CD4-positive, alpha-beta T cell (primary cell): ENCODE measurements at regions of chr9 and their contacts with region 1.

Region 1: DNA sequence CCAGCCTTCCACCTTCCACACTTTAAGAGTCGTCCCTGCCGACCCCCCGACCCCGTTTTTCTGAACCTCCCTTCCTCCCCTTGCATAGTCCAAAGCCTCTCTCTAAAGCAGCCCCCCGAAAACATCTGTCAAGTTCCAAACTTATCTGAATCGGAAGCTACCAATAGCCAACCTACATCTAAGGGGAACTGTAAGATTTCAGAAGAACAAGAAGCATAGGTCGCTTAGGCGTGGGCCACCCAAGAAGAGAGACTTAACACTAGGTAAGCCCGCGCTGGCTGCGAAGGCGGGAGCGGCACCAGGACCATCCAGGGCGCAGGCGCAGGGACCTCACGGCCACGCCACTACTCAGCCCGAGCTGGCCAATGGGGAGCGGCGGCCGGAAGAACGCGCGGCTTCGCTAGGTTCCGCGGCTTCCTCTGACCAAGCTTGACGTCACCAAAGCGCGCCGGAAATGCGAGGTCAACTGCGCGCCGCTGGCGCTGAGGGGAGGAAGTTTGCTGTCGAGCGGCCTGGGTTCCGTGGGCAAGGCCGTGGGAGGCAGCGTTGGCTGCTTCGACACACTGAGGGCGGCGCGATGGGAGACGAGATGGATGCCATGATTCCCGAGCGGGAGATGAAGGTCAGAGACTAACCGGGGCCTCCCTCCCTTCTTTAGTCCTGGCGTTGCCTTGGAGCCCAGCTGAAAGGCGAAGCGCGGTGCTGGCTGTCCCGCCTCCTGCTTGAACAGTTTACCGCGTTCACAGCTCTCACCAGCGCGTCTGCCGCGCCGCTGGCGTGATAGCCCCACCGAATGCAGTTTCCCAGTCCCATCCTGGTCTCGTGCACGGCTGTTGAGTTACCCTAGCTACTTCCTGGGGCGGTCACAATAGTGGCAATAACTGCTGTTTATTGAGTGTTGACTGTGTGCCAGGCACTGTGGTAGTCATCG is at the start of gene NUP214:
- DNase-seq: peak; percentile 97 to 100 (median 99)
- ATAC-seq: peak; percentile 97
- H3K4me3 ChIP-seq: peak within 1 kb of the TSS; percentile 76
- H3K4me3 Mint-ChIP-seq: peak within 1 kb of the TSS; percentile 96
- H3K27ac ChIP-seq: peak within 1 kb of the TSS; percentile 78 to 87
- H3K27ac Mint-ChIP-seq: peak within 1 kb of the TSS; percentile 92
- H3K4me1 ChIP-seq: peaks cover 24% of the 10 kb centered on the region
- H3K4me1 Mint-ChIP-seq: peaks cover 37% of the 10 kb centered on the region
- H3K27me3 ChIP-seq: no peaks in the 10 kb centered on the region
- H3K27me3 Mint-ChIP-seq: no peaks in the 10 kb centered on the region
- CTCF ChIP-seq: no peak
- total RNA-seq, gene NUP214: 105 to 107 TPM

Region 2: GRCh38 chr9:130693426-130694191 is 431.8 kb before region 1 on chr9 and contains the start of gene EXOSC2:
- CTCF ChIA-PET with region 1: no interaction called
- POLR2A ChIA-PET with region 1: interaction called, 8 read pairs
- intact Hi-C with region 1: loop called (anchors 2 to 10 kb)
- DNase-seq: peak; percentile 96 to 99 (median 98)
- ATAC-seq: peak; percentile 98
- H3K4me3 ChIP-seq: peak within 1 kb of the TSS; percentile 77
- H3K4me3 Mint-ChIP-seq: peak within 1 kb of the TSS; percentile 95
- H3K27ac ChIP-seq: peak within 1 kb of the TSS; percentile 42 to 57
- H3K27ac Mint-ChIP-seq: peak within 1 kb of the TSS; percentile 79
- H3K4me1 ChIP-seq: peaks cover 31% of the 10 kb centered on the region
- H3K4me1 Mint-ChIP-seq: peaks cover 44% of the 10 kb centered on the region
- H3K27me3 ChIP-seq: no peaks in the 10 kb centered on the region
- H3K27me3 Mint-ChIP-seq: no peaks in the 10 kb centered on the region
- CTCF ChIP-seq: no peak
- total RNA-seq, gene EXOSC2: 49.2 to 50.2 TPM

Region 3: DNA sequence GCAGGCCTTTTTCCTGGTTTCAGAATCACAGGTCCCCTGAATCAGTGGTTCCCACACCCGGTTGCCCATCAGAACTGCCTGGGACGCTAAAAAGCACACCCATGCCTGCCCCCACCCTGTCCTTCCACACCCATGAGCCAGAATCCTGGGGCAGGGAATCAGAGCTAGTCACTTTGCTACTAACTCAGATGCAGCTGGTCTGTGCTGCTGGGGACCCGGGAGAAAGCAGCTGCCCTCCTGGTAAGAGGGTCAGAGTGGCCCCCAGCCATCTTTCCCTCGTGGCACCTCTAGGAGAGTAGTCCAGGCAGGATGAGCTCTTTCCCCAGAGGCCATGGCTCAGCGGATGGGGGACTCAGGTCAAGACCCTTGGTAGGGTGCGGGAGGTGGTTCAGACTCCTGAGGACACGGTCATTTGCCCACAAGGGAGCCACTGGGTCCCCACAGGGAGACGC is 11.3 kb before region 1 on chr9:
- CTCF ChIA-PET with region 1: no interaction called
- POLR2A ChIA-PET with region 1: no interaction called
- intact Hi-C with region 1: no loop called
- DNase-seq: no peak
- ATAC-seq: no peak
- H3K4me3 ChIP-seq: no peak overlapping the region
- H3K4me3 Mint-ChIP-seq: no peak overlapping the region
- H3K27ac ChIP-seq: no peak overlapping the region
- H3K27ac Mint-ChIP-seq: no peak overlapping the region
- H3K4me1 ChIP-seq: no peaks in the 10 kb centered on the region
- H3K4me1 Mint-ChIP-seq: no peaks in the 10 kb centered on the region
- H3K27me3 ChIP-seq: peaks cover 2 to 5% of the 10 kb centered on the region in 2 experiments
- H3K27me3 Mint-ChIP-seq: peaks cover 7% of the 10 kb centered on the region
- CTCF ChIP-seq: no peak

Region 4: DNA sequence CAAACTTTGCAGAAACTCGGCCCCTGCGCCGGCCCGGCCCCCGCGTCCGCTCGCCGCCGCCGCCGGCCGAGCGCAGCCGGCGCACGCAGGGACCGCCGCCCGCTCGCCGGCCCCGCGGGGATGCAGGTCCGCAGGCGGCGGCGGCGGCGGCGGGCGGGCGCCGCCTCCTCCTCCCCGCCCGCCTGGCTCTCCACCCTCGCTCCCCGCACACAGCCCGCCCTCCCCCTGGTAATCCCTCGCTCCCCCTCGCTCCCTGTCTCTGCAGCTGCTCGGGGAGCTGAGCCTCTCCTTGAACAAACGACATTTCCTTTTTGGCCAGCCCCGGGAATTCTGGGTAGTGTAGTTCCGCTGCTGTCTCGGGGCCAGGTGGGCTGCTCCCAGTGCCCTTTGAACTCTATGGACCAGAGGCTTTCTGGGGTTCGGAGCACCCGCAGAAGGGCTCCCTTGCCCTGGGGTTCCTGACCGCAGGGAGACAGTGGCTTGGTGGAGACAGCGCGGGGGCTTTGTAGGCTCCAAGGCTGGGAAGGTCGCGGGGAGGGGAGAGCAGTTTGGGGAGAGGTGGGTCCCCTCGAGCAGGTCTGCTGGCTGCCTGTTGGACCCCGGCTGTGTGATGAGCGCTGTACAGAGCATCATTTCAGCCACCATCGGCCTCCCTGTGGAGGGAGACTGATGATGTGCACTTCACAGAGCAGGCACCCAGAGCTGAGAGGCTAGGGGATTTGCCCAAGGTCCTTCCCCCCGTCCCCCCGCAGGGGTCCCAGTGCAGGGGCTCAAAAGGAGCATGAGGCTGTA is 152.7 kb after region 1 on chr9:
- CTCF ChIA-PET with region 1: no interaction called
- POLR2A ChIA-PET with region 1: interaction called, 8 read pairs
- intact Hi-C with region 1: loop called in 1 of 2 experiments (anchors 5 kb)
- DNase-seq: peak; percentile 45 to 89 (median 66)
- ATAC-seq: peak; percentile 55
- H3K4me3 ChIP-seq: peak overlapping the region; percentile 99
- H3K4me3 Mint-ChIP-seq: peak overlapping the region; percentile 93
- H3K27ac ChIP-seq: peak overlapping the region; percentile 73 to 82
- H3K27ac Mint-ChIP-seq: peak overlapping the region; percentile 94
- H3K4me1 ChIP-seq: peaks cover 32% of the 10 kb centered on the region
- H3K4me1 Mint-ChIP-seq: peaks cover 32% of the 10 kb centered on the region
- H3K27me3 ChIP-seq: peaks cover 0 to 9% of the 10 kb centered on the region in 2 experiments
- H3K27me3 Mint-ChIP-seq: no peaks in the 10 kb centered on the region
- CTCF ChIP-seq: no peak

Region 5: GRCh38 chr9:132079391-132080091 is 954.1 kb after region 1 on chr9 and contains the start of gene MED27:
- CTCF ChIA-PET with region 1: no interaction called
- POLR2A ChIA-PET with region 1: interaction called, 5 read pairs
- intact Hi-C with region 1: loop called in 1 of 2 experiments (anchors 5 kb)
- DNase-seq: peak; percentile 81 to 96 (median 92)
- ATAC-seq: peak; percentile 98
- H3K4me3 ChIP-seq: peak within 1 kb of the TSS; percentile 88
- H3K4me3 Mint-ChIP-seq: peak within 1 kb of the TSS; percentile 91
- H3K27ac ChIP-seq: peak within 1 kb of the TSS in 1 of 2 donors; percentile 11
- H3K27ac Mint-ChIP-seq: peak within 1 kb of the TSS; percentile 68
- H3K4me1 ChIP-seq: peaks cover 19% of the 10 kb centered on the region
- H3K4me1 Mint-ChIP-seq: peaks cover 47% of the 10 kb centered on the region
- H3K27me3 ChIP-seq: peaks cover 0 to 2% of the 10 kb centered on the region in 2 experiments
- H3K27me3 Mint-ChIP-seq: peaks cover 11% of the 10 kb centered on the region
- CTCF ChIP-seq: no peak
- total RNA-seq, gene MED27: 15.0 to 17.4 TPM